ENCODE measurements at regions of chr11 and their contacts with region 1.

Region 1: DNA sequence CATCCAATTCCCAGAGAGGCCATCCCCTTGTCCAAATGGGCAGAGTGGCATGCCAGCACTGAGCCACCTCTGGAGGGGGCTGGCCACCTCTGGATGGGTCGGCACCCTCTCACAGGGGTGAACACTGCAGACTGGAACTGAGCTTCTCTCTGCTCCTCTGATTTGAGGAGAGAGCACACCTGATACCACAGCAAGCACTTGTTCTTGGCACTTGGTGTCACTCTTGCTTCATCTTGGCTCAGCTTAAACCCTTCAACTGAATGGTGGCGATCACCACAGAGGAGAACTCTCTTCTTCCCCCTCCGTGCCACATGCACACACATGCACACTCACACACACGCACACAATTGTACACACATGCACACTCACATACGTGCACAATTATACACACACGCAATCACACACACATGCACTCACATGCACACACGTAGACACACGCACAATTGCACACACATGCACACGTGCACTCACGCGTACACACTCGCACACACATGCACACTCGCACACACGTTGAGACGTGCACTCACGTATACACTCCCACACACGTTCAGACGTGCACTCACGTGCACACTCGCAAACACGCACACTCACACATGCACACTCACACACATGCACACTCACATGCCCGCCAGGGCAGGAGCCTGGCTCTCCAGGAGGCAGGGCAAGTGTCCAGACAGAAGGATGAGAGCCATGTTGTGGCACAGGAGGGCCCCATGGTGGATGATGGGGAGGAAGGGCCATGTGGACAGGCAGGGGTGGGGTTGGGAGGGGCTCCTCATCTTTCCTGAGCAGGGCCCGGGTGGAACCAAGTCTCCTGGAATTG is 23.4 kb downstream of the OVOL1 start:
- DNase-seq: peak in 3 of 9 donors; percentile 27 to 31 (median 29)
- ATAC-seq: peak; percentile 73
- H3K4me3 ChIP-seq: no peak overlapping the region
- H3K4me3 Mint-ChIP-seq: no peak overlapping the region
- H3K27ac ChIP-seq: no peak overlapping the region
- H3K27ac Mint-ChIP-seq: peak overlapping the region in 1 of 9 donors; percentile 59
- H3K4me1 ChIP-seq: no peaks in the 10 kb centered on the region
- H3K4me1 Mint-ChIP-seq: peaks cover 0 to 8% (median 2%) of the 10 kb centered on the region in 7 donors
- H3K27me3 ChIP-seq: no peaks in the 10 kb centered on the region
- H3K27me3 Mint-ChIP-seq: peaks cover 0 to 15% (median 0%) of the 10 kb centered on the region in 5 donors

Region 2: DNA sequence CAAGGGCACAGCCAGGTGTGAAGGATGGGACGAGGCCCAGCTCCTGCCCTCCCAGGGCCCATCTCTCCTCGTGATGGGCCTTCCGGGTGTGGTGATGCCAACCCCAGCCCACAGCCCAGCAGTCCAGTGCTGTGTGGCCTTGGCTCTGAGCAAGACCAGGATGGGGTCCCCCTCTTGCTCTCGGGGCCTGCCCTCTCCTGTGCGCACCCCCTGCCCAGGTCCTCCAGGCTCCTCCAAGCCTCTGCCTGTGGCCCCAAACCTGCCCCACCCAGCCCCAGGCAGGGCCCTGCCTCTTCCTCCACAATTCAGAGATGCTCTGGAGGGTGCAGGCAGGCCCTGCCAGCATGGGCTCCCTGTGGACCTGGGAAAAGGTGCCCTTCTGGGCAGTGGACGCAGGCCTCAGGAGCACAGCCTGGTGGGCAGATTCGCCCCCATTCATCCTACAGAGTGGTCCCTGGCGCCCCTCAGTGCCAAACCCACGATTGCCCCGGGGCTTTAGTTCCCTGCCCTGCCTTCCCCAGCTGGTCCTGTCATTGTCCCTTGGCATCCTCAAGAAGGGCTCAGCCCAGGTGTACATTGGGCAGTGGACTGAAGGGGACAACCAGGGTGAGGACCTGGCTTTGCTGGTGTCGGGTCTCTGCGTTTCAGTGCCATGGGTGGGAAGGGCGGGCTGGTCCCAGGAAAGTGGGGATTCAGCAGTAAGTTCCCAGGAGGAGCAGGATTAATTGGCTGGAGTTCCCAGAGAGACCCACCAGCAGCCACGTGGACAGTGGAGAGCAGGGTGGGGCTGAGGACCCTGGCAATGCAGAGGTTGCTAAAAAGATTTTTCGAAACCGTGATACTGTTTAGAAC is 171.9 kb after region 1 on chr11:
- CTCF ChIA-PET with region 1: no interaction called
- POLR2A ChIA-PET with region 1: no interaction called
- intact Hi-C with region 1: no loop called
- DNase-seq: no peak
- ATAC-seq: no peak
- H3K4me3 ChIP-seq: no peak overlapping the region
- H3K4me3 Mint-ChIP-seq: no peak overlapping the region
- H3K27ac ChIP-seq: no peak overlapping the region
- H3K27ac Mint-ChIP-seq: peak overlapping the region in 2 of 9 donors; percentile 21 to 64
- H3K4me1 ChIP-seq: no peaks in the 10 kb centered on the region
- H3K4me1 Mint-ChIP-seq: peaks cover 0 to 3% (median 0%) of the 10 kb centered on the region in 7 donors
- H3K27me3 ChIP-seq: no peaks in the 10 kb centered on the region
- H3K27me3 Mint-ChIP-seq: no peaks in the 10 kb centered on the region

Region 3: DNA sequence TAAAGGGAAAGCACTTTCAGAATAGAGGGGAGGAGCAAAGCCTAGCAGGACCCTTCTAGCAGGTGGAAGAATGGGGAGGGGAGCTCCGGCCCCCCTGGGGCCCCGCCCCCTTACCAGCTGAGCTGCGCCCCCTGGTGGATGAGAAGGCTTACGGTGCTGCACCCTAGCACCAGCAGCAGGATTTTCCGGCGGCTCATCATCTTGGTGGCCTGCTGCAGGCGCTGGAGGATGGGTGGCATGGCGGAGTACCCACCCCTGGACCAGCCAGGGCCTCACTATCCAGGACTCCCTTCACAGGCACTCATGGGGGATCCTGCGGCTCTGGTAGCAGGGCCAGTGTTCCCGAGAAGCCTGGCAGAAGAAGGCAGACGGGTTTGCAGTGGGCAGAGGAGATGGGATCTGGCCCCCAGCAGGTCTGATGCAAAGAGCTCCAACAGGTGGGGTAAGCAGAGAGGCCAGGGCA is 235.0 kb after region 1 on chr11:
- CTCF ChIA-PET with region 1: no interaction called
- POLR2A ChIA-PET with region 1: no interaction called
- intact Hi-C with region 1: loop called in 1 of 2 experiments (anchors 1 kb)
- DNase-seq: peak; percentile 70 to 89 (median 81)
- ATAC-seq: peak; percentile 98
- H3K4me3 ChIP-seq: no peak overlapping the region
- H3K4me3 Mint-ChIP-seq: peak overlapping the region in 3 of 10 donors; percentile 12 to 29 (median 17)
- H3K27ac ChIP-seq: no peak overlapping the region
- H3K27ac Mint-ChIP-seq: peak overlapping the region in 2 of 9 donors; percentile 17 to 34
- H3K4me1 ChIP-seq: peaks cover 0 to 9% of the 10 kb centered on the region in 2 donors
- H3K4me1 Mint-ChIP-seq: peaks cover 4 to 23% (median 15%) of the 10 kb centered on the region in 7 donors
- H3K27me3 ChIP-seq: no peaks in the 10 kb centered on the region
- H3K27me3 Mint-ChIP-seq: peaks cover 0 to 19% (median 0%) of the 10 kb centered on the region in 5 donors

Region 4: DNA sequence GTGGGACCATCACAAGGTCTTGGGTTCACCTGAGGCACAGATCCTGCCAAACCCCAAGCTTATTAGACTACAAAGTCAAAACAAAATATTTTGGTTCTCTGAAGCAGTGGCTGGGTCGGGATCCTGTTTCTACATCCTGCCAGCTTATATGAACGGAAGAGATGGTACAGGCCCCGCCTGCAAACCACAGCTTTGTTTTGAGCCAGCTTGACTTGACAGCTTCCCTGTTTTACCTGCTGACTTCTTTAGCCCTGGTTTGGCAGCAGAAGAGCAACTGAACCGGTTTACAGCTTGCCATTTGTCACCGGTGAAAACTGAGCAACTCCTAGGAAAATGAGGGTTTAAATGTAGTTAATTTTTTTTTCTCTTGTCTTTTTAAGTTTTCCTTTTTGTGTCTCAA is 271.2 kb after region 1 on chr11:
- CTCF ChIA-PET with region 1: no interaction called
- POLR2A ChIA-PET with region 1: no interaction called
- intact Hi-C with region 1: no loop called
- DNase-seq: peak; percentile 38 to 91 (median 86)
- ATAC-seq: peak; percentile 98
- H3K4me3 ChIP-seq: peak overlapping the region; percentile 38
- H3K4me3 Mint-ChIP-seq: peak overlapping the region; percentile 61 to 95 (median 89)
- H3K27ac ChIP-seq: peak overlapping the region; percentile 80
- H3K27ac Mint-ChIP-seq: peak overlapping the region; percentile 93 to 100 (median 98)
- H3K4me1 ChIP-seq: peaks cover 56 to 77% of the 10 kb centered on the region in 2 donors
- H3K4me1 Mint-ChIP-seq: peaks cover 62 to 98% (median 86%) of the 10 kb centered on the region in 7 donors
- H3K27me3 ChIP-seq: no peaks in the 10 kb centered on the region
- H3K27me3 Mint-ChIP-seq: no peaks in the 10 kb centered on the region

Measured in naive thymus-derived CD4-positive, alpha-beta T cell (primary cell).